Prostate gland (tissue), 2 donors: ENCODE measurements at regions of chr16 and their contacts with region 1.

Region 1: DNA sequence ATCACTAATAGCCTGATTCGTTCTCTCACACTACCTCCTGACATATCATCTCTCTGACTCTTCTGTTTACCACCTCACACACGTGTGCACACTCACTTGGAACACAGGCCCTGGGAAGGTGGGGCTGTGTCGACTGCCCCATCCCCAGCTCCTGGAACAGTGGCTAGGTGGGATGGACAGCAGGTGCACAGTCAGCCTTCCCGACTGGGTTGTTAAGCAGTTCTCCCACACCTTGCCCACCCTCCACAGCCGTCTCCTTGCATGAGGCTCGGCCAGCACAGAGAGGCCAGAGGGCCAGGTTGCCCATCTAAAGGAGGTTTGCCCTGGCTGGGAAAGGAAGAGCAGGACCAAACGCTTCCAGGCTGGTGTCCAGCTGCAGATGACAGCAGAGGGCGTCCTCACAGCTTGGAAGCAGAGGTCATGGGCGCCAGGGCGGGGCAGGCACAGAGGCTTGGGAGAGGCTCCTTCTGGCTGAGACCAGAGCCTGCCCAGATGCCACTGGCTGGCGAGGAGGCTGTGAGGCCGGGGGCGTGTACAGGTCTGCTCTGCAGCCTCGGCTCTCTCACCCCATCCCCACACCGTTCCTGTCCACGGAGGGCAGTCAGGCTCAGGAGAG is 92.8 kb downstream of the AMFR start:
- DNase-seq: no peak
- H3K4me3 ChIP-seq: no peak overlapping the region
- H3K27ac ChIP-seq: no peak overlapping the region
- H3K4me1 ChIP-seq: no peaks in the 10 kb centered on the region
- H3K27me3 ChIP-seq: no peaks in the 10 kb centered on the region
- CTCF ChIP-seq: peak in 1 of 4 experiments; percentile 34
- POLR2A ChIP-seq: no peak

Region 2: GRCh38 chr16:56355786-56356275 is 23.3 kb after region 1 on chr16:
- intact Hi-C with region 1: loop called (anchors 1 kb)
- DNase-seq: no peak
- H3K4me3 ChIP-seq: peak overlapping the region in 1 of 2 donors; percentile 9
- H3K27ac ChIP-seq: no peak overlapping the region
- H3K4me1 ChIP-seq: no peaks in the 10 kb centered on the region
- H3K27me3 ChIP-seq: no peaks in the 10 kb centered on the region
- CTCF ChIP-seq: no peak
- POLR2A ChIP-seq: no peak